ENCODE measurements at regions of chr1 and their contacts with region 1.

Region 1: DNA sequence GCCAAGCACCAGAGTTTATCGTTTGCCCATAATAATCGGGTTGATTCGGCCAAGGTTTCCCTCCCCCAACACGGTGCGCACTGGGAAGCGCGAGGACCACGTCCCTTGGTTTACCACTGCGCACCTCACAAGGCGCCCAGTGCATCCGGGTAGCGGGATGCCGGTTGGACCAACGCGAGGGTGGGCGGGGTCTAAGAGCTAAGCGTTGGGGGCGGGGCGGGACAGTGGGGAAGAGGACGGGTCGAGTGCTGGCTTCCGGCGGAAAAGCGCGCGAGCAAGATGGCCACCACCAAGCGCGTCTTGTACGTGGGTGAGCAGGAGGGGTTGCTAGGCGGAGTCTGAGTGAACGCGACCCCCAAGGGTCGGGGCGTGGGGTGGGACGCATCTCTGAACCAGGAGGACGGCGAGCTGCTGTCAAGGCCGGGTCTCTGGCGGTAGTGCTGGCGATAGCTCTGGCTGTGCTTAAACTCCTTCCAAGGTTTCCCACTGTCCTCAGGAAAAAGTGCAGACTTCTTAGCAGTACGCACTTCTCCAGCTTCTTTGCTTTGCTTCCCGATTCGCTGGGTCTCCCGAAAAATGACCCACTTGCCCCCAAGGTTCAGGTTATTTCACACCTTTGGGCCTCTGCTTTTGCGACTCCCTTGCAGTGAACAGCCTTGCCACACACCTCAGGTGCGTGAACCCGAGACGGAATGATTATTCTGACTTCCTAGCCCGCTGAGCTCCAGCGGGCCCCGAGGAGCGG is at the start of gene PPIE:
- DNase-seq: peak; percentile 79
- ATAC-seq: peak; percentile 99
- H3K4me3 Mint-ChIP-seq: peak within 1 kb of the TSS; percentile 98
- H3K27ac Mint-ChIP-seq: peak within 1 kb of the TSS; percentile 88
- H3K4me1 Mint-ChIP-seq: peaks cover 23% of the 10 kb centered on the region
- H3K27me3 Mint-ChIP-seq: peaks cover 15% of the 10 kb centered on the region
- CTCF ChIP-seq: no peak
- total RNA-seq, gene PPIE: 64.9 and 68.5 TPM in 2 replicates

Region 2: GRCh38 chr1:39575191-39576015 is 163.4 kb before region 1 on chr1:
- CTCF ChIA-PET with region 1: no interaction called
- POLR2A ChIA-PET with region 1: interaction called, 12 read pairs
- intact Hi-C with region 1: no loop called
- DNase-seq: peak; percentile 33
- ATAC-seq: peak; percentile 23
- H3K4me3 Mint-ChIP-seq: peak overlapping the region; percentile 89
- H3K27ac Mint-ChIP-seq: peak overlapping the region; percentile 82
- H3K4me1 Mint-ChIP-seq: peaks cover 35% of the 10 kb centered on the region
- H3K27me3 Mint-ChIP-seq: no peaks in the 10 kb centered on the region
- CTCF ChIP-seq: no peak

Region 3: GRCh38 chr1:39727221-39727931 is 11.4 kb before region 1 on chr1:
- CTCF ChIA-PET with region 1: no interaction called
- POLR2A ChIA-PET with region 1: interaction called, 11 read pairs
- intact Hi-C with region 1: no loop called
- DNase-seq: no peak
- ATAC-seq: peak; percentile 31
- H3K4me3 Mint-ChIP-seq: peak overlapping the region; percentile 69
- H3K27ac Mint-ChIP-seq: no peak overlapping the region
- H3K4me1 Mint-ChIP-seq: peaks cover 8% of the 10 kb centered on the region
- H3K27me3 Mint-ChIP-seq: peaks cover 45% of the 10 kb centered on the region
- CTCF ChIP-seq: no peak

Region 4: GRCh38 chr1:39799770-39800470 is 61.1 kb after region 1 on chr1:
- CTCF ChIA-PET with region 1: no interaction called
- POLR2A ChIA-PET with region 1: interaction called, 26 read pairs
- intact Hi-C with region 1: loop called (anchors 1 kb)
- DNase-seq: peak; percentile 64
- ATAC-seq: peak; percentile 68
- H3K4me3 Mint-ChIP-seq: peak overlapping the region; percentile 81
- H3K27ac Mint-ChIP-seq: peak overlapping the region; percentile 93
- H3K4me1 Mint-ChIP-seq: peaks cover 11% of the 10 kb centered on the region
- H3K27me3 Mint-ChIP-seq: no peaks in the 10 kb centered on the region
- CTCF ChIP-seq: no peak

Region 5: GRCh38 chr1:39886757-39887231 is 148.0 kb after region 1 on chr1:
- CTCF ChIA-PET with region 1: no interaction called
- POLR2A ChIA-PET with region 1: no interaction called
- intact Hi-C with region 1: loop called (anchors 1 kb)
- DNase-seq: no peak
- ATAC-seq: no peak
- H3K4me3 Mint-ChIP-seq: no peak overlapping the region
- H3K27ac Mint-ChIP-seq: no peak overlapping the region
- H3K4me1 Mint-ChIP-seq: peaks cover 16% of the 10 kb centered on the region
- H3K27me3 Mint-ChIP-seq: peaks cover 4% of the 10 kb centered on the region
- CTCF ChIP-seq: no peak

Region 6: DNA sequence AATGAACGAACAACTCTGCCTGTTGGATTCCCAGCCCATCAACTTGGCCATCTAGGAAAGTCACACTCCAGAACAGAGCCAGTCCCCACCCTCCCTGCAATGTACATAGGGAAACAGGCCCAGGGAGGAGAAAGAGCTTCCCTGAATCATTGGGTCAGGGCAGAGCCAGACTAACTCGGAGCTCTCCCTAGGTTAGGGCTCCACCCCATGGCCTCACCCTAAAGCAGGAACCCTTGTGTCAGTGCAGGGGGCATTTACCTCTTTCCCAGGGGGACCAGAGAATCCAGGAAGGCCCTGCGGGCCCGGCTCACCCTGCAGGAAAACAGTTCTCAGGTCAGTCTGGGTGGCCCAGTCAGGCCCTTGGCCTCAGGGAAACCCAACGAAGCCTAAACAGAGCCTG is 566.7 kb after region 1 on chr1:
- CTCF ChIA-PET with region 1: no interaction called
- POLR2A ChIA-PET with region 1: no interaction called
- intact Hi-C with region 1: no loop called
- DNase-seq: no peak
- ATAC-seq: no peak
- H3K4me3 Mint-ChIP-seq: no peak overlapping the region
- H3K27ac Mint-ChIP-seq: no peak overlapping the region
- H3K4me1 Mint-ChIP-seq: no peaks in the 10 kb centered on the region
- H3K27me3 Mint-ChIP-seq: no peaks in the 10 kb centered on the region
- CTCF ChIP-seq: no peak

Measured in activated B cell treated with CpG ODN at 0.5 μM for 24 hours (primary cell).